ENCODE measurements at regions of chr4 and their contacts with region 1.

Region 1: DNA sequence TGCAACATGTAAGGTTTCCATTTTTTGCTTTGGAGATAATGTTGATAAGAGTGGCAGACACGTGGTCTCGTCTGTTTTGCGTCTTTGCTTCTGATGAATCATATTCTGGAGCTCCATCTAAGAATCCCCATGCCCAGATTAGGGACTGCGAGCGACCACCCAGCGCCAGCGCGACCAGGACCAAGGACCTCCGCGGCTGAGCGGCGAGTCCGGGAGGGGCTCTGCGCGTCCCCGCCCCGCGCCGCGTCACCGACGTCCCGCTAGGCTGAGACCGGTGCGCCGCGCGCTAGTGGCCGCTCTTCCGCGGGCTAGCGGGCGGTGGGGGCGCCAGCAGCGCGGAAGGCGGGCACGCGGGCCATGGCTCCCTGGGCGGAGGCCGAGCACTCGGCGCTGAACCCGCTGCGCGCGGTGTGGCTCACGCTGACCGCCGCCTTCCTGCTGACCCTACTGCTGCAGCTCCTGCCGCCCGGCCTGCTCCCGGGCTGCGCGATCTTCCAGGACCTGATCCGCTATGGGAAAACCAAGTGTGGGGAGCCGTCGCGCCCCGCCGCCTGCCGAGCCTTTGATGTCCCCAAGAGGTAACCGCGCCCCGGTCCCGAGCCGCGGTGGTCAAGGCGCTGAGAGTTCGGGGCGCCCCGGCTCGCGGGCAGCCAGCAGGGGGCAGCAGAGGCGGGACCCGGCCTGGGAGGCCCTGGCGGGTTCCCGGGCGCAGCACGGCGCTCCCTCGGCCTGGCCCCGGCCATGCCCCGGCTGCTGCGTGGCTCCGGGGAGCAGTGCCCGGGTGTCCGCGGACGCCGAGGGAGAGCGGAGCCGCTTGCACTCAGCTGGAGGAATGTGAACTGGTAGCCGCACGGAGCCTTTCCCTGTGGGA is at the start of gene SRD5A3:
- DNase-seq: peak; percentile 73
- H3K4me3 ChIP-seq: peak within 1 kb of the TSS; percentile 78 to 97 (median 81)
- H3K27ac ChIP-seq: peak within 1 kb of the TSS; percentile 59
- H3K4me1 ChIP-seq: peaks cover 9% of the 10 kb centered on the region
- H3K27me3 ChIP-seq: no peaks in the 10 kb centered on the region
- CTCF ChIP-seq: peak; percentile 53 to 80
- total RNA-seq, gene SRD5A3: 12.1 to 12.5 TPM

Region 2: DNA sequence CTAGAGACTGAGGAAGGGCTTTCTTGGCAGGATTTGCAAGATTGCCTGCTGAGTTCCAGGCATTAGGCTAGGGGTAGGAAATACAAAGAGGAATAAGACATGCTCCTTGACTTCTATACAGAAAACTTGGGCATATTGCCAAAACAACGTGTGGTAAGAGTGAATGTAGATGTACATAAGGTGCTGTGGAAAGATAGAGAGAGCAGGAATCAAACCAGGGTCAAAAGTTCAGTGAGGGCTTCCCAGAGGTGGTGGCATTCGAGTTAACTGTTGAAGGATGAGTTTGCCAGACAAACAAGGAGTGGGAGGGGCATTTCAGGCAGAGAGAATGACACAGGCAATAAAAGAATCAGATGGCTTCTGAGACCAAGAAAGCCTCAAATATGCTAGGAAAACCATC is 408.7 kb before region 1 on chr4:
- CTCF ChIA-PET with region 1: interaction called, 10 read pairs
- dilution Hi-C with region 1: no loop called
- in situ Hi-C with region 1: no loop called
- intact Hi-C with region 1: no loop called
- DNase-seq: no peak
- H3K4me3 ChIP-seq: no peak overlapping the region
- H3K27ac ChIP-seq: no peak overlapping the region
- H3K4me1 ChIP-seq: no peaks in the 10 kb centered on the region
- H3K27me3 ChIP-seq: peaks cover 3% of the 10 kb centered on the region
- CTCF ChIP-seq: no peak

Region 3: GRCh38 chr4:55272589-55272988 is 73.6 kb before region 1 on chr4:
- CTCF ChIA-PET with region 1: no interaction called
- dilution Hi-C with region 1: no loop called
- in situ Hi-C with region 1: no loop called
- intact Hi-C with region 1: no loop called
- DNase-seq: no peak
- H3K4me3 ChIP-seq: no peak overlapping the region
- H3K27ac ChIP-seq: no peak overlapping the region
- H3K4me1 ChIP-seq: no peaks in the 10 kb centered on the region
- H3K27me3 ChIP-seq: peaks cover 3% of the 10 kb centered on the region
- CTCF ChIP-seq: no peak

Region 4: GRCh38 chr4:55395529-55396307 is 49.5 kb after region 1 on chr4 and contains the start of gene TMEM165:
- CTCF ChIA-PET with region 1: no interaction called
- dilution Hi-C with region 1: no loop called
- in situ Hi-C with region 1: no loop called
- intact Hi-C with region 1: loop called (anchors 1 kb)
- DNase-seq: peak; percentile 93
- H3K4me3 ChIP-seq: peak within 1 kb of the TSS; percentile 74 to 96 (median 85)
- H3K27ac ChIP-seq: peak within 1 kb of the TSS; percentile 89
- H3K4me1 ChIP-seq: peaks cover 17% of the 10 kb centered on the region
- H3K27me3 ChIP-seq: no peaks in the 10 kb centered on the region
- CTCF ChIP-seq: no peak
- total RNA-seq, gene TMEM165: 101 to 121 TPM

Region 5: DNA sequence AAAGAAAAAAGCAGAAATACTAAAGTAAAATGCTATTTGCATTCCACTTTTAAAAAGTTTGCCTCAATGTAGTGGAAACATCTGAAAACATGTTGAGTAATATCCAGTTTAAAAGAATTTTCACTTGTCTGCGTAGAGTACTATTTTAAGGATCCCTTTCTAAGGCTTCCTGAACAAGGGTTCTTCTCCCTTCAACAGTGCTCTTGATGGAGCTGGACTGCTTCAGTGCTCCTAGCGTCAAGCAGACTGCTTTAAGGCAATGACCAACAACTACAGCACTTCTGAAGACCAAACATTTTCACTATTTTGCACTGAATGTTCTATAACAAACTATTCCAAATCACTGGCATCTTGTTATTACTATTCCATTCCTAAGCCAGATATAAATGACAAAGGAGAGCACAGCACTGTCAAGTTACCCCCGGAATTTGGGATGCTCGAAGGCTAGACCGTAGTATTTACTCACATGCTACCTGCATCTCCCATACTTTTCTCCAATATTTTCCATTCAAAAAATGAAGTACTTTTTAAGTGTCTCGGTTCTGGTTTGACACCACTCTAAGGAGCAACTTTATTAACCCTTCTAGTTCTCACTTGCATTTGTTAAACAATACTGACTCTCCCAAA is 85.6 kb after region 1 on chr4:
- CTCF ChIA-PET with region 1: no interaction called
- dilution Hi-C with region 1: no loop called
- in situ Hi-C with region 1: no loop called
- intact Hi-C with region 1: no loop called
- DNase-seq: no peak
- H3K4me3 ChIP-seq: no peak overlapping the region
- H3K27ac ChIP-seq: no peak overlapping the region
- H3K4me1 ChIP-seq: no peaks in the 10 kb centered on the region
- H3K27me3 ChIP-seq: no peaks in the 10 kb centered on the region
- CTCF ChIP-seq: no peak

Region 6: GRCh38 chr4:55554453-55555030 is 208.3 kb after region 1 on chr4:
- CTCF ChIA-PET with region 1: interaction called, 10 read pairs
- dilution Hi-C with region 1: no loop called
- in situ Hi-C with region 1: no loop called
- intact Hi-C with region 1: loop called (anchors 2 kb)
- DNase-seq: no peak
- H3K4me3 ChIP-seq: no peak overlapping the region
- H3K27ac ChIP-seq: no peak overlapping the region
- H3K4me1 ChIP-seq: peaks cover 11% of the 10 kb centered on the region
- H3K27me3 ChIP-seq: no peaks in the 10 kb centered on the region
- CTCF ChIP-seq: peak; percentile 12 to 56

Region 7: GRCh38 chr4:55866973-55867574 is 520.9 kb after region 1 on chr4:
- CTCF ChIA-PET with region 1: no interaction called
- dilution Hi-C with region 1: no loop called
- in situ Hi-C with region 1: no loop called
- intact Hi-C with region 1: loop called (anchors 2 kb)
- DNase-seq: peak; percentile 54
- H3K4me3 ChIP-seq: no peak overlapping the region
- H3K27ac ChIP-seq: peak overlapping the region; percentile 59
- H3K4me1 ChIP-seq: peaks cover 20% of the 10 kb centered on the region
- H3K27me3 ChIP-seq: no peaks in the 10 kb centered on the region
- CTCF ChIP-seq: peak; percentile 82 to 88